Heart right ventricle (tissue), 16 donors: ENCODE measurements at regions of chr6 and their contacts with region 1.

Region 1: GRCh38 chr6:3013479-3013878 is 13.8 kb downstream of the NQO2 start:
- DNase-seq: peak in 1 of 2 donors; percentile 31
- ATAC-seq: peak in 3 of 8 donors; percentile 37 to 67 (median 53)
- H3K4me3 ChIP-seq: no peak overlapping the region
- H3K27ac ChIP-seq: peak overlapping the region in 1 of 10 donors; percentile 45
- H3K4me1 ChIP-seq: peaks cover 0 to 7% (median 0%) of the 10 kb centered on the region in 9 donors
- H3K27me3 ChIP-seq: no peaks in the 10 kb centered on the region
- CTCF ChIP-seq: no peak

Region 2: GRCh38 chr6:2688416-2689064 is 324.9 kb before region 1 on chr6:
- intact Hi-C with region 1: no loop called
- DNase-seq: no peak
- ATAC-seq: peak in 3 of 8 donors; percentile 65 to 79 (median 73)
- H3K4me3 ChIP-seq: no peak overlapping the region
- H3K27ac ChIP-seq: peak overlapping the region in 4 of 10 donors; percentile 16 to 48 (median 33)
- H3K4me1 ChIP-seq: peaks cover 0 to 6% (median 0%) of the 10 kb centered on the region in 9 donors
- H3K27me3 ChIP-seq: no peaks in the 10 kb centered on the region
- CTCF ChIP-seq: no peak

Region 3: GRCh38 chr6:2900821-2901644 is 112.4 kb before region 1 on chr6:
- intact Hi-C with region 1: no loop called
- DNase-seq: peak in 1 of 2 donors; percentile 71
- ATAC-seq: peak in 1 of 8 donors; percentile 17
- H3K4me3 ChIP-seq: peak overlapping the region in 8 of 10 donors; percentile 12 to 93 (median 72)
- H3K27ac ChIP-seq: peak overlapping the region in 4 of 10 donors; percentile 11 to 94 (median 66)
- H3K4me1 ChIP-seq: peaks cover 0 to 41% (median 28%) of the 10 kb centered on the region in 9 donors
- H3K27me3 ChIP-seq: no peaks in the 10 kb centered on the region
- CTCF ChIP-seq: no peak

Region 4: DNA sequence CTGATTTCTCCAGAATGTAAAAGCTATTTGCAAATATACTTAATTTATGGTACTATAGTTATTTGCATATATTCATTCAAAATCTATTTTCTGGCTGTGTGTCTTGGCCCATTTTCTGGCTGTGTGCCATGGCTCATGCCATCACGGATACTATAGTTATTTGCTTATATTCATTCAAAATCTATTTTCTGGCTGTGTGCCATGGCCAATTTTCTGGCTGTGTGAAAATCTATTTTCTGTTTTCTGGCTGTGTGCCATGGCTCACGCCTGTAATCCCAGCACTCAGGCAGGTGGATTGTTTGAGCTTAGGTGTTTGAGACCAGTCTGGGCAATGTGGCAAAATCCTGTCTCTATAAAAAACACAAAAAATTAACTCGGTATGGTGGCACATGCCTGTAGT is 25.9 kb after region 1 on chr6:
- intact Hi-C with region 1: loop called in 1 of 10 experiments (anchors 1 kb)
- DNase-seq: no peak
- ATAC-seq: no peak
- H3K4me3 ChIP-seq: no peak overlapping the region
- H3K27ac ChIP-seq: no peak overlapping the region
- H3K4me1 ChIP-seq: peaks cover 0 to 17% (median 5%) of the 10 kb centered on the region in 9 donors
- H3K27me3 ChIP-seq: no peaks in the 10 kb centered on the region
- CTCF ChIP-seq: no peak

Region 5: GRCh38 chr6:3258720-3259490 is 245.4 kb after region 1 on chr6 and contains the start of gene PSMG4:
- intact Hi-C with region 1: loop called in 1 of 10 experiments (anchors 5 kb)
- DNase-seq: peak; percentile 97 to 98
- ATAC-seq: peak; percentile 97 to 98 (median 98)
- H3K4me3 ChIP-seq: peak within 1 kb of the TSS; percentile 76 to 99 (median 94)
- H3K27ac ChIP-seq: peak within 1 kb of the TSS; percentile 14 to 92 (median 84)
- H3K4me1 ChIP-seq: peaks cover 2 to 41% (median 28%) of the 10 kb centered on the region in 9 donors
- H3K27me3 ChIP-seq: no peaks in the 10 kb centered on the region
- CTCF ChIP-seq: peak in 2 of 9 donors; percentile 4 to 21
- total RNA-seq, gene PSMG4: 8.1 to 10.8 (median 10.0) TPM